Psoas muscle (tissue), 8 donors: ENCODE measurements at regions of chr6 and their contacts with region 1.

Region 1: DNA sequence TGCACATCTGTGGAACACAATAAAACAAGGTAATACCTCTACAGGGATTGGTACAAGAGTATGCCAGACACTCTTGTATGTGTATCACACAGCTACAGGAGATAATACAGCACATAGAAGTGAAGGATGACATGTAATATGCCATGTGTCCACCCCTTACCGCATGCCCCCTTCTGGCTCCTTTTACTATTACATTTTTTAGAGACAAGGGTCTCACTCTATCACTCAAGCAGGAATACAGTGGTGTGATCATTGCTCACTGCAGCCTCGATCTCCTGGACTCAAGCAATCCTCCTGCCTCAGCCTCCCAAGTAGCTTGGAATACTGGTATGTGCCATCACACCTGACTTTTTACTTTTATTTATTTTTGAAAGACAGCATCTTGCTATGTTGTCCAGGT is 4.2 kb upstream of the NCR3 start:
- DNase-seq: no peak
- ATAC-seq: peak in 2 of 4 donors; percentile 27 to 41
- H3K4me3 ChIP-seq: no peak overlapping the region
- H3K27ac ChIP-seq: no peak overlapping the region
- H3K4me1 ChIP-seq: no peaks in the 10 kb centered on the region
- H3K27me3 ChIP-seq: no peaks in the 10 kb centered on the region
- CTCF ChIP-seq: peak; percentile 23

Region 2: DNA sequence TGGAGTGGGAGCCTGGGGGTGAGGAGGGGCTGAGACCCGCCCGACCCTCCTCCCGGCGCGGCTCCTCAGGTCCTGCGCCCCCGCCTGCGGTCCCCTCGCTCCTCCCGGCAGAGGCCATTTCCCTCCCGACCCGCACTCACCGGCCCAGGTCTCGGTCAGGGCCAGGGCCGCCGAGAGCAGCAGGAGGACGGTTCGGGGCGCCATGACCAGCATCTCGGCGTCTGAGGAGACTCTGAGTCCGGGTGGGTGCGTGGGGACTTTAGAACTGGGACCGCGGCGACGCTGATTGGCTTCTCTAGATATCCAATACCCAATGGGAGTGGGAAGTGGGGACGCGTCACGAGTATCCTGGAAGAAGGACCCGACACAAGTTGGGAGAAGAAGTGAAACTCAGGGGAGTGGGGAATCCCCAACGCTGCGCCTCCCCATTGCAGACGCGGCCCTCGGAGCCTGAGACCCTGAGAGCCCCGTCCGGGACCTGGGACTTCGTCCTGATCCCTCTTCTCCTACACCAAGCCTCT is 240.0 kb before region 1 on chr6 and contains the start of gene HLA-B:
- intact Hi-C with region 1: no loop called
- DNase-seq: peak; percentile 83 to 85
- ATAC-seq: peak; percentile 91 to 97 (median 95)
- H3K4me3 ChIP-seq: peak within 1 kb of the TSS; percentile 67
- H3K27ac ChIP-seq: peak within 1 kb of the TSS; percentile 74
- H3K4me1 ChIP-seq: no peaks in the 10 kb centered on the region
- H3K27me3 ChIP-seq: peaks cover 2 to 26% (median 10%) of the 10 kb centered on the region in 3 donors
- CTCF ChIP-seq: no peak
- total RNA-seq, gene HLA-B: 185 to 402 (median 277) TPM

Region 3: GRCh38 chr6:31493875-31494694 is 102.9 kb before region 1 on chr6:
- intact Hi-C with region 1: loop called in 1 of 2 experiments (anchors 5 kb)
- DNase-seq: peak; percentile 80 to 85
- ATAC-seq: peak; percentile 77 to 88 (median 86)
- H3K4me3 ChIP-seq: peak overlapping the region; percentile 67
- H3K27ac ChIP-seq: no peak overlapping the region
- H3K4me1 ChIP-seq: peaks cover 2% of the 10 kb centered on the region
- H3K27me3 ChIP-seq: peaks cover 0 to 51% (median 8%) of the 10 kb centered on the region in 3 donors
- CTCF ChIP-seq: peak; percentile 64

Region 4: GRCh38 chr6:31580807-31581433 is 16.1 kb before region 1 on chr6:
- intact Hi-C with region 1: loop called (anchors 2 kb)
- DNase-seq: peak; percentile 91 to 95
- ATAC-seq: peak; percentile 98 to 100 (median 99)
- H3K4me3 ChIP-seq: peak overlapping the region; percentile 89
- H3K27ac ChIP-seq: peak overlapping the region; percentile 75
- H3K4me1 ChIP-seq: no peaks in the 10 kb centered on the region
- H3K27me3 ChIP-seq: no peaks in the 10 kb centered on the region
- CTCF ChIP-seq: peak; percentile 97

Region 5: DNA sequence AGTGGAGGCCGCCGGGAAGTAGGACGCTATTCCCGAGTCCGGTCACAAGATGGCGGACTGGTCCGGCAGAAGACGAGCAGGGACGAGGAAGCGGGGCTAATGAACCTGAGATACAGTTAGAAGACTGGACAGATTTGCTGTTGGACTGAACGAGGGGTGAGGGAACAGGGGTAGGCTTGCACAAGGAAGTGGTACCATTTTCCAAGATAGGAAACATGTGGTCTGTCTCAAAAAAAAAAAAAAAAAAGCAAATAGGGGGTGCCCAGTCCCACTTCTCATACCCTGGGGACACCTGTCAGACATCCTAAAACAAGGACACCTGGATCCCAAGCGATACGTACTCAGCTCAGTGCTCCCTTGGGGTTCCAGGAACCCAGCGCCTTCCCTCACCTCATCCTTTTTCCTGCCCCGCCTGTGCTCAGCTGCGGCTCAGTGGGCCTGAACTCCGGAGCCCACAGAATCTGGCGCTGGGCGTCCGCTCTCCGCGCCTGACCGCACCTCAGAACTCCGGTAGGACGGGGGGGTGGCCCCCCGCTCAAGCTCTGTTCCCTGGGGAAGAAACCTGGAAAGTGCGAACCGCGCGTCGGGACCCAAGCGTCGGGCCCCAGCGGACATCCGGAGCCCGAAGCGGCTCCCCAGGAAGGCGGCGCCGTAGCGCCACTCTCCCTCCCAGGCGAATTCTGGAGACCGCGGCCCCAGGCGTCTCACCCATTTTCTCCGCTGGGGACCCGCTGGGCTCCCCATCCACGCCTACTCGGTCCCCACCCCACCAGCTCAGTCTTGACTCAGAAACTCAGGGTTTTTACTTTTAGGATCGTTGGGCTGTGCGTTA is 84.0 kb after region 1 on chr6 and contains the start of gene LY6G5C:
- intact Hi-C with region 1: no loop called
- DNase-seq: peak; percentile 82 to 91
- ATAC-seq: peak; percentile 90 to 96 (median 94)
- H3K4me3 ChIP-seq: peak within 1 kb of the TSS; percentile 70
- H3K27ac ChIP-seq: peak within 1 kb of the TSS; percentile 13
- H3K4me1 ChIP-seq: peaks cover 8% of the 10 kb centered on the region
- H3K27me3 ChIP-seq: no peaks in the 10 kb centered on the region
- CTCF ChIP-seq: peak; percentile 71
- total RNA-seq, gene LY6G5C: 0.75 to 3.2 (median 2.3) TPM